ENCODE measurements at regions of chr17 and their contacts with region 1.

Region 1: GRCh38 chr17:32006957-32007462 is at the start of gene LRRC37B:
- DNase-seq: peak; percentile 27
- H3K4me3 ChIP-seq: peak within 1 kb of the TSS; percentile 99
- H3K27ac ChIP-seq: no peak within 1 kb of the TSS
- H3K27me3 ChIP-seq: no peaks in the 10 kb centered on the region
- CTCF ChIP-seq: peak; percentile 73
- polyA plus RNA-seq, gene LRRC37B: 11.0 and 13.1 TPM in 2 replicates

Region 2: GRCh38 chr17:31919802-31920525 is 87.0 kb before region 1 on chr17:
- CTCF ChIA-PET with region 1: no interaction called
- POLR2A ChIA-PET with region 1: no interaction called
- DNase-seq: peak; percentile 34
- H3K4me3 ChIP-seq: no peak overlapping the region
- H3K27ac ChIP-seq: peak overlapping the region; percentile 80
- H3K27me3 ChIP-seq: no peaks in the 10 kb centered on the region
- CTCF ChIP-seq: no peak

Region 3: GRCh38 chr17:31997005-31997404 is 10.0 kb before region 1 on chr17:
- CTCF ChIA-PET with region 1: interaction called, 14 read pairs
- POLR2A ChIA-PET with region 1: interaction called, 3 read pairs
- DNase-seq: no peak
- H3K4me3 ChIP-seq: no peak overlapping the region
- H3K27ac ChIP-seq: no peak overlapping the region
- H3K27me3 ChIP-seq: no peaks in the 10 kb centered on the region
- CTCF ChIP-seq: no peak

Region 4: GRCh38 chr17:32136856-32137255 is 129.8 kb after region 1 on chr17:
- CTCF ChIA-PET with region 1: interaction called, 15 read pairs
- POLR2A ChIA-PET with region 1: interaction called, 4 read pairs
- DNase-seq: no peak
- H3K4me3 ChIP-seq: no peak overlapping the region
- H3K27ac ChIP-seq: no peak overlapping the region
- H3K27me3 ChIP-seq: no peaks in the 10 kb centered on the region
- CTCF ChIP-seq: no peak

Region 5: DNA sequence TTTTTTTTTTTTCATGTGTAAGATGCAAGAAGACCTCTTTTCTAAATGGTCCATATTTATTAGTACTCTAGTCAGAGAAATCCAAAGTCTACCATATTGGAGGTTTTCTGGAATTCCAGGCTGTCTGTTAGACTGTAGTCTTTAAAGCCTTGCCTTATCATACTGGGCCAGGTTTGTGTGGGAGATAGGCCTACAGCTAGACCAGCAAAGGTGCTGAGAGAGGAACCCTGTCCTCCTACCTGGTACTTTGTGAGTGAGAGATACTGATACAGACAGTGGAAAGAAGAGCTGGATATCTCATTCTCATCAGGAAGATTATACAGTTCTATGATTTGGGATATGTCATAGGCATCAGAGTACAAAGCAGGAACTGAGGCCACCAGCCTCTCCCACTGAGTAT is 143.3 kb after region 1 on chr17:
- CTCF ChIA-PET with region 1: no interaction called
- POLR2A ChIA-PET with region 1: no interaction called
- DNase-seq: no peak
- H3K4me3 ChIP-seq: no peak overlapping the region
- H3K27ac ChIP-seq: no peak overlapping the region
- H3K27me3 ChIP-seq: no peaks in the 10 kb centered on the region
- CTCF ChIP-seq: no peak

Measured in AG04450 (cell line).